ENCODE measurements at regions of chr1 and their contacts with region 1.

Region 1: DNA sequence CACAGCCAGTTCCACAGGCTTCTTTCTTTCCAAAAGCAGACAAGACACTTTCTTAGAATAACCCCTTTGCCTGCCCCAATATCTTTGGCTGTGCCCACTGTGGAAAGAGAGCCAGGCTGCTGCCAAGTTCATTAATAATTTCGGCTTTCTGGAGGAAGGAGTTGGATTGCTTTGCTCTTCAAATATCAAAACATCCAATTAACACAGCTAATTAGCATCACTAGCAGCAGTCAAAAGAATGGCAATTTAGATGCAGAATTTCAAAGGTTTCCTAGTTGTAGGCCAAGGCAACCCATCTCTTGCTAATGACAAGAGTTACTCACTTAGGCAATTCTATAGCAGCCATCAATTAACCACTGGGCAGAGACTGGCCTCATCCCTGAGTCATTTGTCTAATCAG is 91.0 kb upstream of the SPATA6 start:
- DNase-seq: no peak
- H3K4me3 ChIP-seq: no peak overlapping the region
- H3K27ac ChIP-seq: no peak overlapping the region
- H3K4me1 ChIP-seq: no peaks in the 10 kb centered on the region
- H3K27me3 ChIP-seq: no peaks in the 10 kb centered on the region
- CTCF ChIP-seq: no peak
- EP300 ChIP-seq: no peak
- POLR2A ChIP-seq: no peak

Region 2: DNA sequence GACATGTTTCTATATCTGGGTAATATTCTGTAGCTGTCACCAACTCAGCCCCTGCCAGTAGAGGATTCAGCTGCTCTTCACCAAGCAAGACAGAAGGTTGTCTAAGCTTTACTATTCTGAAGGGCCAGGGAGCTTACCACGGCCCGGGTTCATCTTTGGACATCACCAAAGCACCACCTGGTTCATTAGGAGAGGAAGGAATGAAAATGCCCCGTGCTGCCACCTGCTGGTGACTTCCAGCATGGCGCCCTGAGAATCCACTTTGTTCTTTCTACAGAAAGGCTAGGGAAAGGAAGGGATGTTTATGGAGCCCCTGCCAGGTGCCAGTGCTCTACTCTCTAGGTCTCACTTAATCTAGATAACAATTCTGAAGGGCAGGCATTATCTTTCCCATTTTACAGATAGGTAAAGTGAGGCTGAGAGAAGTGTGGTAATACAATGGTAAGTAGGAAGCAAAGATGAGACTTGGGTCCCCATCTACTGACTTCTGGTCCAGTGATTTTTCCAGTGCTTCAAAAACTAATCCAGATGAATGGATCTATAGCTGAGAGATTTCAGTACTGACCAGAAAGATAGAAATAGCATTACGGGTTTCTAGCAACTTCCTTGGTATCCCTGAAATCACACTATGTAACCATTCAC is 134.2 kb after region 1 on chr1:
- intact Hi-C with region 1: loop called in 1 of 4 experiments (anchors 10 kb)
- DNase-seq: peak; percentile 17 to 71 (median 57)
- H3K4me3 ChIP-seq: no peak overlapping the region
- H3K27ac ChIP-seq: no peak overlapping the region
- H3K4me1 ChIP-seq: no peaks in the 10 kb centered on the region
- H3K27me3 ChIP-seq: no peaks in the 10 kb centered on the region
- CTCF ChIP-seq: peak; percentile 28 to 40 (median 37)
- EP300 ChIP-seq: no peak
- POLR2A ChIP-seq: no peak